BJ (cell line): ENCODE measurements at regions of chr18 and their contacts with region 1.

Region 1: GRCh38 chr18:59008301-59008974 is 131.2 kb upstream of the SEC11C start:
- DNase-seq: no peak
- H3K4me3 ChIP-seq: no peak overlapping the region
- H3K27me3 ChIP-seq: no peaks in the 10 kb centered on the region
- CTCF ChIP-seq: no peak

Region 2: GRCh38 chr18:59022167-59022945 is 13.9 kb after region 1 on chr18:
- CTCF ChIA-PET with region 1: interaction called, 8 read pairs
- POLR2A ChIA-PET with region 1: interaction called, 28 read pairs
- DNase-seq: no peak
- H3K4me3 ChIP-seq: no peak overlapping the region
- H3K27me3 ChIP-seq: no peaks in the 10 kb centered on the region
- CTCF ChIP-seq: no peak

Region 3: GRCh38 chr18:59311631-59312030 is 303.2 kb after region 1 on chr18:
- CTCF ChIA-PET with region 1: no interaction called
- POLR2A ChIA-PET with region 1: no interaction called
- DNase-seq: no peak
- H3K4me3 ChIP-seq: no peak overlapping the region
- H3K27me3 ChIP-seq: peaks cover 17% of the 10 kb centered on the region
- CTCF ChIP-seq: no peak